ENCODE measurements at regions of chr5 and their contacts with region 1.

Region 1: GRCh38 chr5:38441453-38442246 is 114.8 kb downstream of the LIFR start:
- DNase-seq: peak; percentile 36 to 89 (median 70)
- ATAC-seq: peak; percentile 87 to 99 (median 92)
- H3K4me3 ChIP-seq: no peak overlapping the region
- H3K4me3 Mint-ChIP-seq: no peak overlapping the region
- H3K27ac ChIP-seq: no peak overlapping the region
- H3K27ac Mint-ChIP-seq: peak overlapping the region; percentile 6 to 27
- H3K4me1 ChIP-seq: no peaks in the 10 kb centered on the region
- H3K4me1 Mint-ChIP-seq: peaks cover 1 to 2% (median 2%) of the 10 kb centered on the region in 3 donors
- H3K27me3 ChIP-seq: peaks cover 8 to 34% of the 10 kb centered on the region in 2 experiments
- H3K27me3 Mint-ChIP-seq: peaks cover 21 to 37% of the 10 kb centered on the region in 2 donors

Region 2: DNA sequence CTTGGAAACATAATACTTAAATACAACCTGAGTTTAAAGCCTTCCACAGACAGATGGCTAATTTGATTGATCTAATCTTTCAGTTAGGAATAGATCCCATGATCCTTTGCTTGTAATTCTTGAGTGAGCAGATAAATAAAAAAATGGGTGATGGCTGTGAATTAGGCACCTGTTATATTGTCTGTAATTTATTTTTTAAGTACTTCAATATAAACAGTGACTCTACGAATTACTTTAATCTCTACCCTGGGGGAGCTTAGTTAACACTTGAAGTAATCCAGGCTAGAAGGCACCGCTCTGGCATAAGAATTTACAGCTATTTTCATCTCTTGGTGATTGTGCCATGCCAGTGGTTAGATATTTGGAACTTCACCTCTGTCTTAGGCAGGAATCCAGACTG is 174.3 kb before region 1 on chr5:
- CTCF ChIA-PET with region 1: no interaction called
- POLR2A ChIA-PET with region 1: no interaction called
- DNase-seq: no peak
- ATAC-seq: no peak
- H3K4me3 ChIP-seq: no peak overlapping the region
- H3K4me3 Mint-ChIP-seq: no peak overlapping the region
- H3K27ac ChIP-seq: no peak overlapping the region
- H3K27ac Mint-ChIP-seq: no peak overlapping the region
- H3K4me1 ChIP-seq: no peaks in the 10 kb centered on the region
- H3K4me1 Mint-ChIP-seq: no peaks in the 10 kb centered on the region
- H3K27me3 ChIP-seq: peaks cover 0 to 14% of the 10 kb centered on the region in 2 experiments
- H3K27me3 Mint-ChIP-seq: peaks cover 34 to 49% of the 10 kb centered on the region in 2 donors

Region 3: DNA sequence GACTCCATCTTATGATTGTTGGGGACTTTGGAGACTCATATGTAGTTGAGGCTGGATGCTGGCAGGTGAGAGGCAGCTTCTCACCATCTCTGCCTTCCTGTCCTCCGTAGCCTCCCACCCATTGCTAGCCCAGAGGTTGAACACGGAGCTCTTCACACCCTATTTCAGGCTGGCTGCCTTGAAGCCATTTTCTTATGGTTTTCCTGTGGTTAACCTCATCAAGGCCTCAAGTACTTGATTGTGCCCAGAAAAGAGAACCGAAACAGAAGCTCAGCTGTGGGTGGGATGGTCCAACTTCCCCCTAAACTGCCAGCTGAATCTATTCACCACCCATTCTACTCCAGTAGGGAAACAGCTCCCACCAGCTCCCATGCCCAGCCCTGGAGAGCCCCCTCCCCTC is 11.9 kb after region 1 on chr5:
- CTCF ChIA-PET with region 1: interaction called, 11 to 43 read pairs
- POLR2A ChIA-PET with region 1: interaction called in 1 of 2 experiments, 3 read pairs
- DNase-seq: peak; percentile 10 to 84 (median 44)
- ATAC-seq: peak; percentile 87 to 98 (median 94)
- H3K4me3 ChIP-seq: peak overlapping the region in 1 of 2 donors; percentile 39
- H3K4me3 Mint-ChIP-seq: peak overlapping the region in 2 of 3 donors; percentile 17 to 69
- H3K27ac ChIP-seq: no peak overlapping the region
- H3K27ac Mint-ChIP-seq: peak overlapping the region in 1 of 2 donors; percentile 44
- H3K4me1 ChIP-seq: peaks cover 10 to 45% of the 10 kb centered on the region in 2 experiments
- H3K4me1 Mint-ChIP-seq: peaks cover 36 to 43% (median 42%) of the 10 kb centered on the region in 3 donors
- H3K27me3 ChIP-seq: peaks cover 7 to 67% of the 10 kb centered on the region in 2 experiments
- H3K27me3 Mint-ChIP-seq: peaks cover 67 to 76% of the 10 kb centered on the region in 2 donors

Region 4: DNA sequence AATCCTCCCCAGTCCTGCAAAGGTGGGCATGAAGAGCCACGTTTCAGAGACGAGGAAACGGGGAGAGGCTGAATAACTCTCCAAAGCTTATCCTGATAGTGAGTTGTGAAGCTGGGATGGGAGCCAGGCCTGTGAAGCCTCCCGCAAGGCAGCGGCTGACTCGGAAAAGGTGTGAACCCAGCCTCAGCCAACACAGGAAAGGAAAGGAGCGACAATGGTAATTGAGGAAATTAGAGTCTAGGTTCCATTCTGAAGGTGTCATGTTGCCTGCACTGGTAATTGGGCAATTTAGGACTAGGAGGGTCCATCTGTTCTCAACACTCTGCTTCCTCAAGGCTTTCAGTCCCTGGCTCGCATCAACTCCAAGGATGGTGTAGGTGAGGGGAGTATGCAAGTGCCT is 31.4 kb after region 1 on chr5:
- CTCF ChIA-PET with region 1: interaction called, 3 to 12 read pairs
- POLR2A ChIA-PET with region 1: no interaction called
- DNase-seq: no peak
- ATAC-seq: no peak
- H3K4me3 ChIP-seq: no peak overlapping the region
- H3K4me3 Mint-ChIP-seq: no peak overlapping the region
- H3K27ac ChIP-seq: no peak overlapping the region
- H3K27ac Mint-ChIP-seq: no peak overlapping the region
- H3K4me1 ChIP-seq: no peaks in the 10 kb centered on the region
- H3K4me1 Mint-ChIP-seq: no peaks in the 10 kb centered on the region
- H3K27me3 ChIP-seq: peaks cover 5 to 37% of the 10 kb centered on the region in 2 experiments
- H3K27me3 Mint-ChIP-seq: peaks cover 48 to 53% of the 10 kb centered on the region in 2 donors

Region 5: DNA sequence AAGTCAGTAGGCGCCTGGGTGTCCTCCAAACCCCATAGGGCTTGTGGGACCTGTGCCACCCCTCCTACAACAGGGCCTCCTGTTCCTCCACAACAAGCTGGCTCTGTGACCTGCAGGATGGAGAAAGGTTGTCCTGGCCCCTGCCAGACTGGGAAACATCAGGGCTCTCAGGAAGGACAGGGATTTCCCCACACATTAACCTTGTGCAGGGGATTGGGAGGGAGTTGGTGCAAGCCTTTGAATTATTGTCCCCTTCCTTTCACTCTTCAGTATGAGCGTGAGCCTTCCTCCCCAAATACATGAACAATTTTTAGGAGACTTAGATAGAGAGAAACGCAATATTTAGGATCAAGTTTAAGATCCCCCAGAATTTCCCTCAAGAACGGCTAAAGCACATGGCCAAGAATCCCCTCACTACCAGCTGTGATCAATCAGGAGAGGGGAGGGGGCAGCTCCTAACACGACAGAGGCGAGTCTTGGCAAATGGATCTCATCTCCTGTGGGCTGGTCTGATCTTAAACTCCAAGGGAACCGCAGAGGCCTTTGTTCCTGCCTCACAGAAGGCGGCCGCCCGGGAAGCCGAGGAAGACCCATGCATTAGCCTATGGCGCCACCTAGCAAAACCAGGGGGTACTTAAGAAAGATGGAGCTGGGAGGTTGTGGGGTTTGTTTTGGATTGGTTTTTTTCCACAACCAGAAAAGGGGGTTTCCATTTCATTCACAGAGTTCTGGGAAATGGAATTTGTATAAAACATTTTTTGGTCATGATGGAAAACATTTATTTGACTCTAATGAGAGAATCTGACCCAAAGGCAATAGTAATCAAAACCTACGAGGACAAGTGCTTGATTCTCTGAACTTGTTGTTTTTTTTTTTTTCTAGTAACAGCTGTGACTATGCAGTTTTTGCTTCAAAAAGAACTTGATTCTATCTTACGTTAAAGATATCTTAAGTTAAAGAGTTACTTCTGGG is 368.0 kb after region 1 on chr5:
- CTCF ChIA-PET with region 1: interaction called, 14 to 43 read pairs
- POLR2A ChIA-PET with region 1: no interaction called
- DNase-seq: peak in 26 of 35 experiments; percentile 2 to 57 (median 19)
- ATAC-seq: peak in 1 of 4 experiments; percentile 19
- H3K4me3 ChIP-seq: no peak overlapping the region
- H3K4me3 Mint-ChIP-seq: no peak overlapping the region
- H3K27ac ChIP-seq: no peak overlapping the region
- H3K27ac Mint-ChIP-seq: no peak overlapping the region
- H3K4me1 ChIP-seq: no peaks in the 10 kb centered on the region
- H3K4me1 Mint-ChIP-seq: peaks cover 0 to 3% (median 2%) of the 10 kb centered on the region in 3 donors
- H3K27me3 ChIP-seq: peaks cover 4 to 17% of the 10 kb centered on the region in 2 experiments
- H3K27me3 Mint-ChIP-seq: peaks cover 39 to 44% of the 10 kb centered on the region in 2 donors

Region 6: GRCh38 chr5:39547553-39548154 is 1106.0 kb after region 1 on chr5:
- CTCF ChIA-PET with region 1: interaction called in 1 of 2 experiments, 15 read pairs
- POLR2A ChIA-PET with region 1: interaction called in 1 of 2 experiments, 4 read pairs
- DNase-seq: peak in 9 of 35 experiments; percentile 1 to 67 (median 12)
- ATAC-seq: peak in 2 of 4 experiments; percentile 35 to 47
- H3K4me3 ChIP-seq: no peak overlapping the region
- H3K4me3 Mint-ChIP-seq: peak overlapping the region in 1 of 3 donors; percentile 6
- H3K27ac ChIP-seq: no peak overlapping the region
- H3K27ac Mint-ChIP-seq: no peak overlapping the region
- H3K4me1 ChIP-seq: no peaks in the 10 kb centered on the region
- H3K4me1 Mint-ChIP-seq: peaks cover 3 to 8% (median 8%) of the 10 kb centered on the region in 3 donors
- H3K27me3 ChIP-seq: no peaks in the 10 kb centered on the region
- H3K27me3 Mint-ChIP-seq: peaks cover 2 to 6% of the 10 kb centered on the region in 2 donors

Measured in T-cell (primary cell).